ENCODE measurements at regions of chr11 and their contacts with region 1.

Region 1: DNA sequence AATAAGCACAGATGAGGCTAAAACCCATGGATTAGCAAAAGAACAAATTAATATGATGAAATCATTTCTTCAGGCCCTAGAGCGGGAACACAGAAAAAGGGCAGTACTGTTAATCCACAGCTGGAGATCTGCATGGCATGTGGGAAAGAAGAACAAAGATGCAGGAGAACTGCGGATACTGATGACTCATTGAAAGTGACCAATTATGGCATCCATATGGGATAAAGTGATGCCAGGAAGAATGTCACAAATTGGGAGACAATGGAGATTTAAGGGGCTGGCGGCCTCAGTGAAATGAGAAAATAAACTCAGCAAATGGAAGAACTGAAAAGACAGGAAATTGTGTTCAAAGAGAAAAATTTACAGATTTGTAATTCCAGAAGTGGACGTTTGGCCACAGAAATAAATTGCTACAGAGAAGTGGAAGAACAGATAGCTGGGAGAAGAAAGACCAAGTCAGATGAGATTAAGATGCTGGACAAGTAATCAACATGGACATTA is 39.4 kb downstream of the SIK3 start:
- DNase-seq: no peak
- H3K4me3 Mint-ChIP-seq: no peak overlapping the region
- H3K27ac Mint-ChIP-seq: no peak overlapping the region
- H3K4me1 Mint-ChIP-seq: peaks cover 40% of the 10 kb centered on the region
- H3K27me3 Mint-ChIP-seq: no peaks in the 10 kb centered on the region

Region 2: GRCh38 chr11:116180451-116181202 is 878.2 kb before region 1 on chr11:
- intact Hi-C with region 1: no loop called
- DNase-seq: no peak
- H3K4me3 Mint-ChIP-seq: no peak overlapping the region
- H3K27ac Mint-ChIP-seq: no peak overlapping the region
- H3K4me1 Mint-ChIP-seq: no peaks in the 10 kb centered on the region
- H3K27me3 Mint-ChIP-seq: no peaks in the 10 kb centered on the region

Region 3: GRCh38 chr11:116948391-116948790 is 110.4 kb before region 1 on chr11:
- intact Hi-C with region 1: loop called (anchors 1 kb)
- DNase-seq: peak; percentile 71
- H3K4me3 Mint-ChIP-seq: no peak overlapping the region
- H3K27ac Mint-ChIP-seq: peak overlapping the region; percentile 2
- H3K4me1 Mint-ChIP-seq: peaks cover 18% of the 10 kb centered on the region
- H3K27me3 Mint-ChIP-seq: no peaks in the 10 kb centered on the region

Region 4: GRCh38 chr11:117010808-117011540 is 47.8 kb before region 1 on chr11:
- intact Hi-C with region 1: loop called (anchors 1 kb)
- DNase-seq: no peak
- H3K4me3 Mint-ChIP-seq: no peak overlapping the region
- H3K27ac Mint-ChIP-seq: peak overlapping the region; percentile 80
- H3K4me1 Mint-ChIP-seq: peaks cover 30% of the 10 kb centered on the region
- H3K27me3 Mint-ChIP-seq: no peaks in the 10 kb centered on the region

Region 5: GRCh38 chr11:117042689-117043088 is 16.1 kb before region 1 on chr11:
- intact Hi-C with region 1: loop called (anchors 1 kb)
- DNase-seq: no peak
- H3K4me3 Mint-ChIP-seq: no peak overlapping the region
- H3K27ac Mint-ChIP-seq: no peak overlapping the region
- H3K4me1 Mint-ChIP-seq: peaks cover 44% of the 10 kb centered on the region
- H3K27me3 Mint-ChIP-seq: no peaks in the 10 kb centered on the region

Region 6: DNA sequence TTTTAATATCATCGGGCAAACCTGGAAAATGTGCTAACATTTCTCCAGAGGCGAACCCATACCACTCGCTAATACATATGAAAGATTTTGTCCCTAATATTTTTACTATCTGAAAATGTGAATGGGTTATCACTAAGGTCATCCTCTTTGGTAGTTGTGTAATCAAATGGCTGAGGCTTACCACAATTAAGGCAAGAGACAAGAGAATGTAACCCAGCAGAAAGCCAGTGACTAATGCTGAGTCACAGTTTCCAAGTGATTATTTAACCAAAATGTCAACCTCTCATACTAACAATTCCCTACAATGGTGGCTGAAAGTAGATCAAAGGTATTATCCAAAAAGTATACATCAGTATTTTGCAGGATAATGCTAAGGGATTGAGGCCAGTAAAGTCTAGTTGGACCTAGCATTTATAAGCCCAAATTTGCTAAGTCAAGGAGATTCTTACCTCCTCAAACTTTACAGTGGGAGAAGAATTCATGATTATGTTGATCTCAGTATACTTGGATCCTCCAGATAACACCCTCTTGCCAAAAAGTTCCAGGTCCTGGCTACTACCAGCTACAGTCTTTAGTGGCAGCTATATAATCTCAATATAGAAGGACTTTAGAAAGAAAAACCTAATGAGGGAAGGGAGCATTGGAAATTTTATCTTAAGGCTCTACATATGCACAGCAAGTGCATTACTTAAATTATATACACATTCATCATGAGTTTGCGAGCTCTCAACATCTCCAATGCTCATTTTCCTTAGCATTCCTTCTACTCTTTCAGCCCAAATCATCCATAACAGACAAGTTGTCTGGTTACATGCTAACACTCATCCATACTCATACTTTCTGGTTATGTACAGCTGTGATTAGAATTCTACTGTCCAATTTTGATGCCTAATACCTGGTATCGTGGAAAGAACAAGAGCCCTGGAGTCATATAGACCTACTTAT is 14.0 kb after region 1 on chr11:
- intact Hi-C with region 1: loop called (anchors 1 kb)
- DNase-seq: no peak
- H3K4me3 Mint-ChIP-seq: peak overlapping the region; percentile 26
- H3K27ac Mint-ChIP-seq: peak overlapping the region; percentile 82
- H3K4me1 Mint-ChIP-seq: peaks cover 36% of the 10 kb centered on the region
- H3K27me3 Mint-ChIP-seq: no peaks in the 10 kb centered on the region

Region 7: GRCh38 chr11:117092951-117093590 is 34.3 kb after region 1 on chr11:
- intact Hi-C with region 1: loop called (anchors 1 kb)
- DNase-seq: no peak
- H3K4me3 Mint-ChIP-seq: peak overlapping the region; percentile 60
- H3K27ac Mint-ChIP-seq: peak overlapping the region; percentile 72
- H3K4me1 Mint-ChIP-seq: peaks cover 62% of the 10 kb centered on the region
- H3K27me3 Mint-ChIP-seq: no peaks in the 10 kb centered on the region